ENCODE measurements at regions of chr17 and their contacts with region 1.

Region 1: GRCh38 chr17:34361478-34362061 is 1.5 kb downstream of the CCL1 start:
- DNase-seq: peak; percentile 93
- H3K4me3 ChIP-seq: no peak overlapping the region
- H3K27ac ChIP-seq: no peak overlapping the region
- H3K4me1 ChIP-seq: peaks cover 7% of the 10 kb centered on the region
- H3K27me3 ChIP-seq: peaks cover 0 to 2% of the 10 kb centered on the region in 2 experiments
- CTCF ChIP-seq: peak; percentile 99 to 100
- POLR2A ChIP-seq: no peak

Region 2: GRCh38 chr17:33366981-33367383 is 994.6 kb before region 1 on chr17:
- CTCF ChIA-PET with region 1: no interaction called
- POLR2A ChIA-PET with region 1: no interaction called
- dilution Hi-C with region 1: no loop called
- intact Hi-C with region 1: no loop called
- DNase-seq: no peak
- H3K4me3 ChIP-seq: no peak overlapping the region
- H3K27ac ChIP-seq: no peak overlapping the region
- H3K4me1 ChIP-seq: no peaks in the 10 kb centered on the region
- H3K27me3 ChIP-seq: no peaks in the 10 kb centered on the region
- CTCF ChIP-seq: no peak
- POLR2A ChIP-seq: no peak

Region 3: GRCh38 chr17:33779225-33779591 is 582.4 kb before region 1 on chr17:
- CTCF ChIA-PET with region 1: interaction called, 31 read pairs
- POLR2A ChIA-PET with region 1: no interaction called
- dilution Hi-C with region 1: no loop called
- intact Hi-C with region 1: loop called (anchors 1 kb)
- DNase-seq: peak; percentile 57
- H3K4me3 ChIP-seq: no peak overlapping the region
- H3K27ac ChIP-seq: no peak overlapping the region
- H3K4me1 ChIP-seq: no peaks in the 10 kb centered on the region
- H3K27me3 ChIP-seq: no peaks in the 10 kb centered on the region
- CTCF ChIP-seq: peak; percentile 74 to 85
- POLR2A ChIP-seq: no peak

Region 4: DNA sequence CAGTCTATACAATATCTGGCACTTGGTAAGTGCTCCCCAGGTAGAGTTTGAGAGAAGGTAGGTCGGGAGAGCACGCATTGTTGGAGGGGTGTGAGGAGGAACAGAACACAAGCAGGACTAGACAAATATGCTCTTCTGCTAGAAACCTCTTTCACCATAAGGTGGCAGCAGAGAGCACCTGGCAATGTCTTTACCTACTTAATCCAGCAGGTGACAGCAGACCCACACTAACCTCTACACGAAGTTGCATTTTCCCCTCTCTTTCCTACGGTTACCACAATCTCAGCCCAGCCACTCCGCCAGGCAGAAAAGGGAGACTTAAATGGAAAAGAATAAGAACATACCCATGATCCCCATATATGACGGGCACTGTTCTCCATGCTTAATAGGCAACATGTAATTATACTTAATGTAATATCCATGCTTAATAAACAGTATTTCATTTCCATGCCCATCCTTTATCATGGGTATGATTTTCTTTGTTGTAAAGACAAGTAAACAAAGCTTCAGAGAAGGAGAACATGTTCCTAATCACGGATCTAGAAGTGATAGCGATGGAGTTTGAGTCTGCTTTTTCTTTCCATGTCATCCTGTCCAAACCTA is 161.5 kb before region 1 on chr17:
- CTCF ChIA-PET with region 1: interaction called, 561 read pairs
- POLR2A ChIA-PET with region 1: interaction called, 9 read pairs
- dilution Hi-C with region 1: no loop called
- intact Hi-C with region 1: loop called (anchors 1 kb)
- DNase-seq: peak; percentile 90
- H3K4me3 ChIP-seq: no peak overlapping the region
- H3K27ac ChIP-seq: no peak overlapping the region
- H3K4me1 ChIP-seq: peaks cover 3% of the 10 kb centered on the region
- H3K27me3 ChIP-seq: peaks cover 13 to 34% of the 10 kb centered on the region in 2 experiments
- CTCF ChIP-seq: peak; percentile 100
- POLR2A ChIP-seq: no peak

Region 5: GRCh38 chr17:34248511-34249024 is 113.0 kb before region 1 on chr17:
- CTCF ChIA-PET with region 1: interaction called, 27 read pairs
- POLR2A ChIA-PET with region 1: no interaction called
- dilution Hi-C with region 1: no loop called
- intact Hi-C with region 1: no loop called
- DNase-seq: peak; percentile 92
- H3K4me3 ChIP-seq: no peak overlapping the region
- H3K27ac ChIP-seq: peak overlapping the region; percentile 99
- H3K4me1 ChIP-seq: peaks cover 66% of the 10 kb centered on the region
- H3K27me3 ChIP-seq: no peaks in the 10 kb centered on the region
- CTCF ChIP-seq: no peak
- POLR2A ChIP-seq: no peak

Region 6: GRCh38 chr17:34306466-34306865 is 55.1 kb before region 1 on chr17:
- CTCF ChIA-PET with region 1: interaction called, 179 read pairs
- POLR2A ChIA-PET with region 1: no interaction called
- dilution Hi-C with region 1: no loop called
- intact Hi-C with region 1: loop called (anchors 1 kb)
- DNase-seq: peak; percentile 75
- H3K4me3 ChIP-seq: no peak overlapping the region
- H3K27ac ChIP-seq: no peak overlapping the region
- H3K4me1 ChIP-seq: no peaks in the 10 kb centered on the region
- H3K27me3 ChIP-seq: peaks cover 15% of the 10 kb centered on the region in 2 experiments
- CTCF ChIP-seq: peak; percentile 46 to 57
- POLR2A ChIP-seq: no peak

Region 7: DNA sequence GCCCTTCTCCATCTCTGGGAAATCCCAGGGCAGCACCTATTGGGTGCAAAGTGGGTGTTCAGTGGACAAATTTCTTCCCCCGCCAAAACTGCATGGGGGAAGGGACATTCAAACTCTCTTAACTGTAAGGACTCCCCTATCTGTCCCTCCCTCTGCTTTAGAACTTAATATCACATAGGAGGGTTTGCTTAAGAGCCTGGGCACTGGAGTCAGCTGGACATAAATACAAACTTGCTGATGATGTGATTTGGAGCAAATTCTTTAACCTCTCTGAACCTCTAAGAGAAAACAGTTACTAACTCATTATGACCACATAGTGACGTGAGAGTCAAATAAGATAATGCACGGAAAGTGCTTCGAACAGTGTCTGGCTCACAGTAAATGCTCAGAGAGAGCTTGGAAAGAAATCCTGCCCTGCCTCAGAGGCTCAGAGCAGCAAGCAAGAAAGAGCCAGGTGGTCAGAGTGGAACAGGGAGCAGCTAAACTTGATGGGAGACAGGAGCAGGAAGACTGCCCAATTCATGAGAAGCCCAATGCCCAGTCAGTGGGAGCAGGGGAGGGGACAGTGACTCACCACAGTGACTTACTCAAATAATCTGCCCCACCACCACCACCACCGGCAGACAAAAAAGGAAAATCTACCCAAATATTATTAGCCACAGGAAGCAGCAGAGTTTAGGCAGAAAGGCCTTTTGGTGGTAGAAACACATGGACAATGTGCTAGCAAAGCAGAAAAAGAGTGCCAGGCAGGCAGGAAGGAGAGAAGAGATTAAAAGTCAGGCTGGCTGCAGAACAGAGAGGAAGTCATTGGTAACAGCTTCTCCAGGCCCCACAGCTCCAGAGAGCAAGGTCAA is 25.4 kb after region 1 on chr17:
- CTCF ChIA-PET with region 1: interaction called, 45 read pairs
- POLR2A ChIA-PET with region 1: no interaction called
- dilution Hi-C with region 1: no loop called
- intact Hi-C with region 1: no loop called
- DNase-seq: peak; percentile 53
- H3K4me3 ChIP-seq: no peak overlapping the region
- H3K27ac ChIP-seq: peak overlapping the region; percentile 72
- H3K4me1 ChIP-seq: peaks cover 46% of the 10 kb centered on the region
- H3K27me3 ChIP-seq: peaks cover 0 to 4% of the 10 kb centered on the region in 2 experiments
- CTCF ChIP-seq: no peak
- POLR2A ChIP-seq: no peak